A549 (cell line): ENCODE measurements at regions of chr9 and their contacts with region 1.

Region 1: GRCh38 chr9:33510264-33511183 is 13.5 kb upstream of the ANKRD18B start:
- DNase-seq: peak; percentile 51 to 67
- ATAC-seq: peak; percentile 81 to 82
- H3K4me3 ChIP-seq: peak overlapping the region; percentile 45
- H3K27ac ChIP-seq: peak overlapping the region; percentile 87 to 95
- H3K4me1 ChIP-seq: peaks cover 50% of the 10 kb centered on the region
- CTCF ChIP-seq: no peak
- EP300 ChIP-seq: no peak
- POLR2A ChIP-seq: peak; percentile 82
- RAD21 ChIP-seq: no peak

Region 2: GRCh38 chr9:33290247-33291030 is 220.1 kb before region 1 on chr9 and contains the start of gene NFX1:
- CTCF ChIA-PET with region 1: no interaction called
- POLR2A ChIA-PET with region 1: no interaction called
- DNase-seq: peak; percentile 95 to 99
- ATAC-seq: peak; percentile 86 to 94
- H3K4me3 ChIP-seq: peak within 1 kb of the TSS; percentile 66
- H3K27ac ChIP-seq: peak within 1 kb of the TSS; percentile 91 to 99
- H3K4me1 ChIP-seq: peaks cover 48% of the 10 kb centered on the region
- CTCF ChIP-seq: no peak
- EP300 ChIP-seq: no peak
- POLR2A ChIP-seq: peak; percentile 71
- RAD21 ChIP-seq: no peak
- polyA plus RNA-seq, gene NFX1: 41.1 and 41.2 TPM in 2 replicates

Region 3: GRCh38 chr9:33524306-33524947 is 13.9 kb after region 1 on chr9:
- CTCF ChIA-PET with region 1: interaction called, 5 read pairs
- POLR2A ChIA-PET with region 1: interaction called, 11 read pairs
- DNase-seq: peak in 1 of 2 experiments; percentile 33
- ATAC-seq: peak; percentile 77 to 83
- H3K4me3 ChIP-seq: peak overlapping the region; percentile 68
- H3K27ac ChIP-seq: peak overlapping the region; percentile 98 to 99
- H3K4me1 ChIP-seq: peaks cover 24% of the 10 kb centered on the region; the same call in 2 of the 3 replicates
- CTCF ChIP-seq: no peak
- EP300 ChIP-seq: no peak
- POLR2A ChIP-seq: peak; percentile 50
- RAD21 ChIP-seq: no peak